ENCODE measurements at regions of chr5 and their contacts with region 1.

Region 1: DNA sequence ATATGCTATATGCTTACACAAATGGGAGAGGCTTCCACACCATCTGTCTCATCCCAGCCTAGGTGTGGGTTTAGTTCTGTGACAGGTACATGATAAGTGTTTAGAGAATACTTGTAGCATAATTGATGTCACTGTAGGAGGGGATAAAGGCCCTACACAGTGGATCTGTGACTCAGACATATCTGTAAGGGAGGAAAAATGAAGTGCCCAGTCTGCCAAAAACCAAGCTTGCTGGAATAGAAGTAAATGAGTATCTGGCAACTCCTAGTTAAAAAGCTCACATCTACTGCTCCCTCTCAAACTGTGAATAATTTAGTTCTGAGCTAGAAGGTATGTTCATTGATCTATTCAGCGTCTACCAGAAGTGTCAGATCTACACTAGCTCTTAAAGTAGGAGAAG is 38.9 kb upstream of the FAM174A start:
- DNase-seq: no peak
- H3K4me3 Mint-ChIP-seq: no peak overlapping the region
- H3K27ac Mint-ChIP-seq: no peak overlapping the region
- H3K4me1 Mint-ChIP-seq: no peaks in the 10 kb centered on the region
- H3K27me3 Mint-ChIP-seq: no peaks in the 10 kb centered on the region

Region 2: GRCh38 chr5:100535060-100536005 is 39.0 kb after region 1 on chr5 and contains the start of gene FAM174A:
- intact Hi-C with region 1: loop called (anchors 5 kb)
- DNase-seq: peak; percentile 93
- H3K4me3 Mint-ChIP-seq: peak within 1 kb of the TSS; percentile 92
- H3K27ac Mint-ChIP-seq: peak within 1 kb of the TSS; percentile 92
- H3K4me1 Mint-ChIP-seq: peaks cover 20% of the 10 kb centered on the region
- H3K27me3 Mint-ChIP-seq: peaks cover 9% of the 10 kb centered on the region
- total RNA-seq, gene FAM174A: 8.9 and 11.5 TPM in 2 replicates

Region 3: DNA sequence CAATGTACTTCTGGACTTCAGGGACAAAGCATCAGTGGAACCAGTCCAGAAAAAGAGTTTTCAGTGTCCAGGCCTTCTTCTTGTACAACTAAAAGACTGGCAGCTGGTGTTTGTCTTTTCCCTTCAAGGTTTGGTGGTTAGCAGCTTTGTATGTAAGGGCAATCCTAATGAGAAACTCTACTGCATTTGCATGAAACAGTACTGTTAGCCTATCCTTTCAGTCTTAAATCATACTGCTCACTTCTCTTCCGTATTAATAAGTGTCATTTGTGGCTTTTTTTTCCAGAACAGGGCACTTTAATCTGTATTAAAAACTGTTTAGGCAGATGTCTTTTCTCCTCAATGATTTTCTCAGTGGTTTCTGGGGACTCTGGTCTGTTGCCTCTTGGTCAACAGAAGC is 87.8 kb after region 1 on chr5:
- intact Hi-C with region 1: no loop called
- DNase-seq: no peak
- H3K4me3 Mint-ChIP-seq: no peak overlapping the region
- H3K27ac Mint-ChIP-seq: no peak overlapping the region
- H3K4me1 Mint-ChIP-seq: no peaks in the 10 kb centered on the region
- H3K27me3 Mint-ChIP-seq: no peaks in the 10 kb centered on the region

Region 4: GRCh38 chr5:100722657-100723056 is 226.4 kb after region 1 on chr5:
- intact Hi-C with region 1: loop called (anchors 10 kb)
- DNase-seq: no peak
- H3K4me3 Mint-ChIP-seq: no peak overlapping the region
- H3K27ac Mint-ChIP-seq: no peak overlapping the region
- H3K4me1 Mint-ChIP-seq: peaks cover 3% of the 10 kb centered on the region
- H3K27me3 Mint-ChIP-seq: no peaks in the 10 kb centered on the region

Measured in activated T-helper 2 cell treated with anti-CD3 and anti-CD28 coated beads, Interferon-gamma antibody, Interleukin-2, Interleukin-4, amounts not matched to agents 10 μg/mL and 5 μg/mL and 100 μg/mL, durations not matched to agents 14 hours and 24 hours and 36 hours (primary cell).